PC-3 (cell line): ENCODE measurements at regions of chr1 and their contacts with region 1.

Region 1: DNA sequence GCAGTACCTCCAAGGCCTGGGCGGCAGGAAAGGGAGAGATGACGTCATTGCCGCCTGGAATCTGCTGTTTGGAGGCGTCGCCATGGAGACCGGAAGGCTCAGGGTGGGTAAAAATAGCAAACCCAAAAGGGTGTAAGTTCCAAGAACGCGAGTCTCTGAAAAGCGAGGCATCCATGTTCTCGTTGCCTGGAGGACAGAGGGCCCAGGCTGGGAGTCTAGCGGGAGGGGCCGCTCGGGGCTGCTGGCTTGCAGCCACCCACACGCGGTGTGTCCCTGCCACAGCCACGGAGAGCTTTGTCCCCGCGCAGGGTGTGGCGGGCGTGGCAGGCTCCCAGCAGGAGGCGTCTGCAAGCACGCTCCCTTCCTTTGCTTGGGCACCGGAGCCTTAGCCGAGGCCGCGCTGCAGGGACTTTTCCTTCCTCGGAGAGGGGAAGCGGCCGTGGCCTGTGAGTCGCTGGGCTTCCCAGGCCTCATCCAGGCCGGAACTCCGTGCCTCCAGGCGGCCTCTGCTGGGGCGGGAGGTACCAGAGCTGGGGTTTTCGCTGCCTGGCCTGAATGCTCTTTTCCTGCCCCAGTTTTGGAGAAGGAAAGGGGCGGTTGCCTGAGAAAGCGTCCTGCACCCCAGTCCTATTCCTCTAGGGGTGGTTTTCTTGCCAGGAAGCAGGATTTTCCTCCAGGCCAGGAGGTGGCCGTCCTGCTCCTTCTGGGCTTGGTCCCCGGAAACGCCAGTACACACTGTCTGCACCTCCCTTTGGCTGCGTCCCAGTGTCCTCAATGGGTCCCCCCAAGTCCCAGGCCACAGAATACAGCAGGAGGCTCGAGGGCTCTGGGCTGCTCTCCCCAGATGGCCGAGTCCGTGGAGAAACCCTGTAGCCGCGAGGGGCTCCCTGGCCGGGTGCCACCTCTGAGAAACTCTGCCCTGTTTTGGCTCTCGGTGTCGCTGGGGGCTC is 15.3 kb upstream of the SKI start:
- DNase-seq: peak; percentile 94
- ATAC-seq: peak; percentile 51
- H3K4me3 ChIP-seq: peak overlapping the region; percentile 51
- H3K27ac ChIP-seq: peak overlapping the region; percentile 86
- H3K4me1 ChIP-seq: peaks cover 39% of the 10 kb centered on the region
- H3K27me3 ChIP-seq: no peaks in the 10 kb centered on the region
- CTCF ChIP-seq: peak; percentile 58

Region 2: GRCh38 chr1:2227346-2228153 is 14.7 kb after region 1 on chr1:
- CTCF ChIA-PET with region 1: no interaction called
- POLR2A ChIA-PET with region 1: interaction called, 6 read pairs
- intact Hi-C with region 1: loop called (anchors 1 kb)
- DNase-seq: peak; percentile 99
- ATAC-seq: peak; percentile 85
- H3K4me3 ChIP-seq: peak overlapping the region; percentile 79
- H3K27ac ChIP-seq: peak overlapping the region; percentile 60
- H3K4me1 ChIP-seq: peaks cover 20% of the 10 kb centered on the region
- H3K27me3 ChIP-seq: no peaks in the 10 kb centered on the region
- CTCF ChIP-seq: no peak

Region 3: DNA sequence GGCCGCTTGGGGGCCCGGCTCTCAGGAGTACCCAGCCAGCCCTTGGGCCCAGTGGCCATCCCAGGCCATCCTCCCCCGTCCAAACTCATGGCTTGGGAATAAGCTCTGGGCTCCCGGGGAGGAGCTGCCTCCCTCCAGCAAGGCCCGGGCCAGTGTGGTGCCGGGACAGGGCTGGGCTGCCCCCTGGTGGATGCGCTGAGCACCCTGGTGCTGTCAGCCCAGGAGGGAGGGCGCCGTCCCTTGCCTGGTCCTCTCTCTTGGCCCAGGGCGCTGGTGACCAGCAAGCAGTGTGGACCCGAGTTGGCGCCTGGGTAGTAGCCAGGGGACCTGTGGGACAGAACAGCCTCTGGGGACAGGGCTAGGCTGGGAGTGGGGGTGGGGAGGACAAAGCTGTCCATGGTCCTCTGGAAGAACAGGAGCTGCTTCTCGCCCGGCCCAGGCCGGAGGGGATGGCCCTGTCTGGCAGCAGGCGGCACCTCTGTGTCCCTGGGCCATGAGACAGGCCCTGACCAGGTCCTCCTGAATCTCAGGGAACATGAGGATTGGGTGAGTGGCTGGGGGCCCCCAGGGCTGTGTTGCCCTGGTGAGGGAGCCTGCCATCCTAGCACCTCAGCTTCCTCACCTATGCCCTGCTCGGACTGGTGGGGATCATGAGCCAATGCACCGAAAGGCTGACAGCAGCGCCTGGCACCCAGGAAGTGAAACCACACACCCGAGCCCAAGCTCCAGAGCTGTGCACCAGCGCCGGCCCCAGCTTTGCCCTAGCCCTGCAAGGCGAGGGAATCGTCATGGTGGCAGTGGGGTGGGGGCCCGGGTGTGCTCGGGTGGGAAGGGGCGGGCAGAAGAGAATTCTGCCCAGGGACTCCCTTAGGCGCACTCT is 169.2 kb after region 1 on chr1:
- CTCF ChIA-PET with region 1: interaction called, 8 read pairs
- POLR2A ChIA-PET with region 1: no interaction called
- intact Hi-C with region 1: loop called (anchors 5 kb)
- DNase-seq: peak; percentile 91
- ATAC-seq: peak; percentile 97
- H3K4me3 ChIP-seq: no peak overlapping the region
- H3K27ac ChIP-seq: no peak overlapping the region
- H3K4me1 ChIP-seq: no peaks in the 10 kb centered on the region
- H3K27me3 ChIP-seq: no peaks in the 10 kb centered on the region
- CTCF ChIP-seq: peak; percentile 99